Gastrocnemius medialis (tissue), 4 donors: ENCODE measurements at regions of chr6 and their contacts with region 1.

Region 1: DNA sequence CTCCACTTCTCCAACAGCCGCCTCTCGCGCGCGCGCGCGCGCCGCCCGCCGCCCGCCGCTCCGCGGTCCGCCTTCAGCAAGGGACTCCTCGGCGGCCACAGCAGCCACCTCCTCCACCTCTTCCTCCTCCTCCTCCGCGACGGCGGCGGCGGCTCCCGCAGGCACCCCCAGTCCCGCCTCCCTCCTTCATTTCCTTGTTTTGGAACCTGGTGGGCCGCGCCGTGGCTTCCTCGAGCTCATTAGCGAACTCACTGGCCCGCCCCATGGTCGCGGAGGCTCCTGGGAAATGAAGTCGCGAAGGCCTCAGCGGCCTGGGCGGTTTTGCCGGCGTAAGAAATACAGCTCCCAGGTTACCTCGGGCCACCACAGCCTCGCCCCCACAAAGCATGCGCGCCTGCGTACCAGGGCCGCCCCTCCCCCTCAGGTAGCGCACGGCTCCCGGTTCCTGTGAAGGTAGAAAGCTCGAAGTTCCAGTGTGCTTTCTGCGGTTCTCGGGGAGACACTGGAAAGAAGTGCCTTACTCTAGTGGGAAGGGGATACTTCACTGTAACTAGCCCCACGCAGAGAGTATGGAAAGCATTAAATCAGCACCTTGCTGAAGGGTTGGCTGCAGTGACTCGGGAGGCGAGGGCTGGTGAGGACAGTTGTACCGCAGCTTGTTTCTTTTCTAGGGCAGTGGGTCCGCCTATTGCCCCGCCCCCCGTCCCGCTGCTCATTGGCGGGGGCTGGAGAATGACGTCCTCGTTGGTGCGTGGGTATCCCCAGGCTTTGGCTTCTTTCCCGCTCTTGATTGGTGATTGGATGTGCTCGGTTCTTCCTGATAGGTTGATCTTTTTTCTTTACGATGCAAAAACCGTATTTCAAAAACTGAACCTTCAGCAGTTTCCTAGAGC is at the start of gene CDK19:
- DNase-seq: peak; percentile 97
- ATAC-seq: peak; percentile 92
- H3K4me3 ChIP-seq: peak within 1 kb of the TSS; percentile 65 to 94 (median 82)
- H3K27ac ChIP-seq: peak within 1 kb of the TSS; percentile 89 to 95 (median 91)
- H3K4me1 ChIP-seq: peaks cover 6 to 13% of the 10 kb centered on the region in 2 donors
- H3K27me3 ChIP-seq: no peaks in the 10 kb centered on the region
- CTCF ChIP-seq: no peak
- POLR2A ChIP-seq: peak; percentile 72 to 75
- total RNA-seq, gene CDK19: 3.0 to 7.4 (median 6.3) TPM

Region 2: DNA sequence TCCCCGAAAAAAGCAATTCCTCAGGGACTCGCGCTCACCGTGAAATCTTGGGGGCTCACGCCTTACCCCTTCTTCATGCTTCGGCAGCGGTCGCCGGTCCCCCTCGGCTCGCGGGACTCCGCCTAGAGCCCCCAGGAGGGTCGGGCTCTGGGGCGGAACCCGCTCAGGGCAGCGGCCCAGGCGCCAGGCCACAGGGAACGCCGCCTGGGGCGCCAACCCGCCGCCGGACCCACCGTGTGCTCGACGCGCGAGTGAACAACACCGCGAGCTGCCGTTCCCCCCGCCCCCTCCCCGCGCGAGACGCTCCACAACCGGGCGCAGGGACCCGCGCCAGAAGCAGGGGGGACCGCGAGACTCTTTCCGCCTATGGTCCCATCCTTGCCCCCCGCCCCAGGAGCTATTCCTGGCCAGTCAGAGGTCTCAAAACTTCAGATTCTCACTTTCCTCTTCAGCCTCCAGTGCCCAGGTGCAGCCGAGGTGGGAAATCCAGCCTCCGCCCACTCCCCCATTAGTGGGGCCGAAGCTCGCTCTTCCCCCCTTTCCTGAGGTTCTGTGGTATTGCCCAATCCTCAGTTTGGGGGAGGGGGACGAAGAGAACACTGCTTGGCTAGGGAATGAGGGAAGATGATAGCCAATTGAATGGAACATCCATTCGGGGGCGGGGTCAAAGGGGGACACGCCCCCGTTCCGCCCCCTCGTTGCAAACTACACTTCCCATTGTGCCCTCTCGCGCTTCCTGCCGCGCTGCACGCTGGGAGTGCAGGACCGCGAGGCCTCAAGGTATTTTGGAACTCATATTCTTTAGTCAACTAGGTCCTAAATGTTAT is 635.8 kb before region 1 on chr6 and contains the start of gene WASF1:
- in situ Hi-C with region 1: no loop called
- intact Hi-C with region 1: loop called (anchors 10 kb)
- DNase-seq: peak; percentile 87 to 91
- ATAC-seq: peak; percentile 99
- H3K4me3 ChIP-seq: peak within 1 kb of the TSS; percentile 81 to 99 (median 87)
- H3K27ac ChIP-seq: peak within 1 kb of the TSS; percentile 80 to 93 (median 84)
- H3K4me1 ChIP-seq: peaks cover 38 to 45% of the 10 kb centered on the region in 2 donors
- H3K27me3 ChIP-seq: peaks cover 0 to 6% (median 0%) of the 10 kb centered on the region in 3 donors
- CTCF ChIP-seq: peak in 1 of 5 experiments; percentile 16
- POLR2A ChIP-seq: peak in 1 of 2 donors; percentile 27
- total RNA-seq, gene WASF1: 0.41 to 2.7 (median 1.4) TPM

Region 3: GRCh38 chr6:110476046-110476849 is 339.2 kb before region 1 on chr6 and contains the start of gene SLC22A16:
- in situ Hi-C with region 1: no loop called
- intact Hi-C with region 1: no loop called
- DNase-seq: no peak
- ATAC-seq: no peak
- H3K4me3 ChIP-seq: peak within 1 kb of the TSS; percentile 13 to 32 (median 23)
- H3K27ac ChIP-seq: no peak within 1 kb of the TSS
- H3K4me1 ChIP-seq: no peaks in the 10 kb centered on the region
- H3K27me3 ChIP-seq: peaks cover 5 to 22% (median 16%) of the 10 kb centered on the region in 3 donors
- CTCF ChIP-seq: no peak
- POLR2A ChIP-seq: no peak
- total RNA-seq, gene SLC22A16: not detected

Region 4: GRCh38 chr6:110682460-110682853 is 133.0 kb before region 1 on chr6:
- in situ Hi-C with region 1: no loop called
- intact Hi-C with region 1: loop called (anchors 2 kb)
- DNase-seq: peak; percentile 30 to 46
- ATAC-seq: peak; percentile 98 to 99
- H3K4me3 ChIP-seq: no peak overlapping the region
- H3K27ac ChIP-seq: peak overlapping the region in 3 of 4 donors; percentile 33 to 59 (median 34)
- H3K4me1 ChIP-seq: peaks cover 16% of the 10 kb centered on the region in 2 donors
- H3K27me3 ChIP-seq: no peaks in the 10 kb centered on the region
- CTCF ChIP-seq: peak; percentile 58 to 76 (median 71)
- POLR2A ChIP-seq: no peak

Region 5: GRCh38 chr6:110882271-110882613 is 66.8 kb after region 1 on chr6:
- in situ Hi-C with region 1: loop called in 3 of 4 experiments (anchors 5 to 10 kb)
- intact Hi-C with region 1: no loop called
- DNase-seq: no peak
- ATAC-seq: no peak
- H3K4me3 ChIP-seq: no peak overlapping the region
- H3K27ac ChIP-seq: no peak overlapping the region
- H3K4me1 ChIP-seq: peaks cover 50 to 65% of the 10 kb centered on the region in 2 donors
- H3K27me3 ChIP-seq: no peaks in the 10 kb centered on the region
- CTCF ChIP-seq: no peak
- POLR2A ChIP-seq: no peak

Region 6: DNA sequence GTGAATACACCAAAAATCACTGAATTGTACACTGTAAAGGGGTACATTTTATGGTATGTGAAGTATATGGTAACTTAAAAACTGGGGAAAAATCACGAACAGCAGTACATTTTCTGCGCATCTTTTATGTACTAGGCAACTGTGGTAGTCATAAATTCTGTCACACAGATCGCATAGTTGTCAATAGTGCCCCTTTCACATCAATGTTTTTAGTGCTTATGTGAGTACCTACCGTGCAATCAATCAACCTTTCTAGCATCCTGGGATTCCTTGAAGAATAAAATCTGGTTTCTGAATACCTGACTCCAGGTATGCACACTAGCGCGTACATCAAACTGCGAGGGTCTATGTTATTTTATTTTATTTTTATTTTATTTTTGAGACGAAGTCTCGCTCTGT is 165.7 kb after region 1 on chr6:
- in situ Hi-C with region 1: no loop called
- intact Hi-C with region 1: loop called (anchors 5 kb)
- DNase-seq: no peak
- ATAC-seq: no peak
- H3K4me3 ChIP-seq: peak overlapping the region; percentile 90 to 96 (median 93)
- H3K27ac ChIP-seq: peak overlapping the region; percentile 79 to 94 (median 89)
- H3K4me1 ChIP-seq: peaks cover 0 to 9% of the 10 kb centered on the region in 2 donors
- H3K27me3 ChIP-seq: no peaks in the 10 kb centered on the region
- CTCF ChIP-seq: no peak
- POLR2A ChIP-seq: no peak